Dendritic cell treated with granulocyte-macrophage colony-stimulating factor and Interleukin-4, amounts not matched to agents 40 ng/mL and 50 ng/mL, for 4 days (primary cell): ENCODE measurements at regions of chr1 and their contacts with region 1.

Region 1: GRCh38 chr1:29793101-29793546 is 556.8 kb downstream of the PTPRU start:
- H3K4me3 Mint-ChIP-seq: no peak overlapping the region
- H3K27ac Mint-ChIP-seq: no peak overlapping the region
- H3K4me1 Mint-ChIP-seq: no peaks in the 10 kb centered on the region
- H3K27me3 Mint-ChIP-seq: peaks cover 4% of the 10 kb centered on the region

Region 2: DNA sequence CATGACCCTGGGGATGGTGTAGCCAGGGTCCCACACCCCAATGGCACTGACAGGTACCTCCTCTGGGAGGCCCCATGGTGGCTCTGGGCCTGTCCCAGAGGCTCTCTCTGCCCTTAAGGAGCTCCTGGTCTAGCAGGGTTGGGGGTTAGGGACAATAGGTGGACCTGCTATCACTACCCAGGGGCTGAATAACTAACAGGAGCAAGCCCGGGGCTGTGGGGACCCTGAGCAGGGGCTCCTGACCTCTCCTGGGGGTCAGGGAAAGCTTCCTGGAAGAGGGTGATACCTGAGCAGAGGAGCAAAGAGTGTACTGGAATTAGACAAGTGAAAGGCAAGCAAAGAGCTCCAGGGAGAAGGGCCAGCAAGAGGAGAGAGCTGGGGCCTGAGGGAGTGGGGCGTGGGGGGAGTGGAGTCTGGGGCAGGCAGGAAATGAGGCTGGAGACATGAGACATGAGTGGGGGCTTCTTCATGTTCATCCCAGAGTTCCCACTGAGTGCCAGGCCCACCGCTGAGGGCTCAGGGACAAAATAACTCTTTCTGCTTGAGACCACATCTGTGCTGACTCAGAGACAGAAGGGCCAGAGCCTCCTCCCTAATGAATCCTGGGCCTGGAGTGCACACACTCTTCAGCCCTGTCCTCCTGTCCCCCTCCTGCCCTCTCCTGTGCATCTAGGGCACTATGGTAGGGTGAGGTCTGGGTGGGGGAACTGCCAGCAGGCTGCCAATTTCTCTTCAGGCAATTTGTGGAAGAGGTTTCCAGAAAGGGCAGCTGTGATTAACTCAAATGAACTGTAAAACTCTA is 39.2 kb before region 1 on chr1:
- intact Hi-C with region 1: no loop called
- H3K4me3 Mint-ChIP-seq: no peak overlapping the region
- H3K27ac Mint-ChIP-seq: no peak overlapping the region
- H3K4me1 Mint-ChIP-seq: no peaks in the 10 kb centered on the region
- H3K27me3 Mint-ChIP-seq: peaks cover 5% of the 10 kb centered on the region

Region 3: DNA sequence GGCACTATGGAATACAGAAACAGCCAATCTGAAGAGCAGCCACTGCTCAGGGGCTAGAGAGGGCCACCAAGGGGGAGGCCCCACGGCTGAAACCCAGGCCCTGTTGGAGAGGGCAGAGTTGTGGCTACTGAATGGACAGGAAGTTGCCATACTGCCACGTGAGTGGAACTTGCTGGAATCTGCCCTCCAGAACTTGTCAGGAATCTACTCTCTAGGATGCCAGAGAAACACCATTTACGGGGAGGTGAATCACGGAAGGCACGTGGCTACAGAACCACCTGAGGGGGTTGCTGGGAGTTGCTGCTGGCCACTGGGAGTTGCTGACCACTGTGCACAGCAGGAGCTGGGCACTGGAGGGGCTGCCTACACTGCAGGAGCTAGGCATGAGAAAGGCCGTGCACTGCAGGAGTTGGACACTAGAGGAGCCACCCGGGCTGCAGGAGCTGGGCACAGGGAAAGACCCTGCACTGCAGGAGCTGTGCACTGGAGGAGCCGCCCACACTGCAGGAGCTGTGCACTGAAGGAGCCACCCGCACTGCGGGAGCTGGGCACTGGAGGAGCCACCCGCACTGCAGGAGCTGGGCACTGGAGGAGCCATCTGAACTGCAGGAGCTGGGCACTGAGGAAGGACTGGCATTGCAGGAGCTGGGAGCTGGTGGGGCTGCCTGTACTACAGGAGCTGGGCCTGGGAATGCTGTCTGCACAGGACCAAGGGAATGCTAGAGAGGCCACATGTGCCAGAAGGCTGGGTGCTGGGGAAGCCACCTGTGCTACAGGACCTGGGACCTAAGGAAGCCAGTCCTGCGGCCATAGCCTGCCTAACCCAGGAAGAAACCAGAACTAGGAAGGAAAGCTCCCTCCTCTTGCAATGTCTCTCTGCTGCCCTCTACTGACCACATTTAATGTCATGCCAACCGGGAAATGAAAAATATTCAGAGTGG is 586.8 kb after region 1 on chr1:
- intact Hi-C with region 1: loop called (anchors 10 kb)
- H3K4me3 Mint-ChIP-seq: no peak overlapping the region
- H3K27ac Mint-ChIP-seq: no peak overlapping the region
- H3K4me1 Mint-ChIP-seq: peaks cover 9% of the 10 kb centered on the region
- H3K27me3 Mint-ChIP-seq: peaks cover 12% of the 10 kb centered on the region

Region 4: GRCh38 chr1:30707412-30708360 is 914.6 kb after region 1 on chr1:
- intact Hi-C with region 1: loop called (anchors 10 kb)
- H3K4me3 Mint-ChIP-seq: no peak overlapping the region
- H3K27ac Mint-ChIP-seq: no peak overlapping the region
- H3K4me1 Mint-ChIP-seq: no peaks in the 10 kb centered on the region
- H3K27me3 Mint-ChIP-seq: peaks cover 30% of the 10 kb centered on the region